Endothelial cell of umbilical vein (primary cell): ENCODE measurements at regions of chr5 and their contacts with region 1.

Region 1: DNA sequence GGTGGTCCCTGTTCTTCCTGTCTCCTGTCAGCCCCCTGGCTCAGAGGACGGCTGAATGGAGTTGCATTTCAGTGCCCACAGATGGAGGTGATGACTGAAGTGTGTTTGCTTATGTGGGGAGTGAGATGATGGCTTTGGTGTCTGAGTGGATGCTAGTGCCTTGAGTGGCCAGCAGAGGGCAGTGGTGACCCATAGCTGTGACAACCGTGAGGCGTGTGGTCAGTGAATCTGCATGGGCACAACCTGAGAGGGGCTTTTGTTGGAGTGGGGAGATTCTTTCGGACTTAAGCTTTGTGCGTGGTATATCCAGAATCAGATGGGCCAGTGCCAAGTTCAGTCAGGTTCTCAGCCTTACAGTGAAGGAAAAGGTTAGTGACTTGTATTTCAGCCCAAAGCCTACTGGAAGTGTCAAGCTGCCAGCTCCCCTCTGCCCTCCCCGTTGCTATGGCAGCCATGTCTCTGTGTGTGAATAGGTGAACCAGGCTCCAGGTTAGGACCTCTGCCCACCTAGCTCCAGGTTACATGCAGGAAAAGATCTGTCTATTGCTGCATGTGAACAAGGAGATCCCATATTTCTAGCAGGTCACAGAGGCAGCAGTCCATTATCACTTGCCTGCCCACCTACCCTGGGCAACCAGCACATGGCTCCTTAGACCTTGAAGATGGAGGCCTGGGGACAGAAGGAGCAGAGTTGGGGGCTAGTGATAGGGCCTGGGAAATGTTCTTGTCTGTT is 14.7 kb upstream of the CXXC5 start:
- DNase-seq: peak; percentile 85
- H3K4me3 ChIP-seq: no peak overlapping the region
- H3K27ac ChIP-seq: no peak overlapping the region
- H3K4me1 ChIP-seq: peaks cover 22% of the 10 kb centered on the region
- H3K27me3 ChIP-seq: no peaks in the 10 kb centered on the region
- CTCF ChIP-seq: peak; percentile 93 to 95
- POLR2A ChIP-seq: no peak

Region 2: DNA sequence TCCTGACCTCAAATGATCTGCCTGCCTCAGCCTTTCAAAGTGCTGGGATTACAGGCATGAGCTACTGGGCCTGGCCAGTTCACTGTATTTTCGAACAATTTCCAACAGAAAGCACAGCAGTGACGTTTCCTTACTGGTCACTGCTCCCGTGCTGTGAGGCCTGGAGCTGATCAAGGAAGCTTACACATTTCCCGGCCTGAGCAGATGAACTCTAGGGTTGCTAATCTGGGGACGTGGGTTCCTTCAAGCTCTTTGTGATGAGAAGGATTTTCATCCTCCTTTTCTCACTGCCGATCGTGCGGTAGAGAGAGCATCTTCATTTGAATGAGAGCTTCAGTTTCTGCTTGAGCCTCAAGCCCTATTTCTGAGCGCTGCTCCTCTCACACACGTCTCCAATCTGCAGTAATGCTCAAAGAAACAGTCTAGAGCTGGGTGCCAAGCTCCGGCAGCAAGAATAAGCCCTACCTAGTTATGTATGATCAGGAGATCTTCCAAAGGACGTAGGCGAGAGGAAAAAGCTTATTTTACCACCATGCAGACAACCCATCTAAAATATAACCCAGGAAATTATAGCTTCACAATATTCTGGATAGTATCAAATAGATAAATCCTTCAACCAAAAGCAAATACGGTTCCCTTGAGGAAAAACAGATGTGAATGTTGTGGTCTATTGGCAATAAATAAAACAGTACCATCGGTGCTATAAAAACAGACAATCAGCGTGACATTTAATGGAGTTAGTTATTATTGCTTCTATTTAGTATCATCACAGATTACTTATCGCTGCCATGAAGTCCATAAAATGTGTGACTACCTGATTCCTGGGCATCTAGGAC is 222.2 kb before region 1 on chr5:
- CTCF ChIA-PET with region 1: no interaction called
- POLR2A ChIA-PET with region 1: no interaction called
- dilution Hi-C with region 1: no loop called
- intact Hi-C with region 1: no loop called
- DNase-seq: no peak
- H3K4me3 ChIP-seq: no peak overlapping the region
- H3K27ac ChIP-seq: no peak overlapping the region
- H3K4me1 ChIP-seq: no peaks in the 10 kb centered on the region
- H3K27me3 ChIP-seq: no peaks in the 10 kb centered on the region
- CTCF ChIP-seq: no peak
- POLR2A ChIP-seq: no peak

Region 3: DNA sequence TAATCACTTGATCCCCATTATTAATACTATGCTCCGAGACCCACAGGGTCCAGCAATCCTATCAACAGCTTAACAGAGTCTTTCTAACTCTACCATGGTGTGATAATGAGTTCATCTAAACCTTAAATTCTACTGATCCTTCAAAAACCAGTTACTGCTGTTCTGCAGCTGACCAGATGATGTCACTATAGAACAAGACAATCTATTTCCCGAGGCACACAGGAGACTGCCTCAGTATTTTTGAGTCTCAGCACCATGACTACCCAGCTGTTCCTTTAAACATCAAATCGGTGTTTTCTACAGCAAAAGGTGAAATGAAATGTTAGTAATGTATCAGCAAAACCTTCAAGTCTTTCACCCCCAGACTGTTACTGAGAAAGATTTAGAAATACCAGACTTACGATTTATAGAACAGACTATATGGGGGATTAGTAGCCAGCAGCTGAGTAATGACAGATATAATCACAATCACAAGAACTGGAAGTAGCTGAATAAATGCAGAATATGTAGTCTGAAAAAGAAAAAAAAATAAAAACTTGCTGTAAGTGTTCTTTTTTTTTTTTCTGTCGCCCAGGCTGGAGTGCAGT is 211.1 kb before region 1 on chr5:
- CTCF ChIA-PET with region 1: interaction called, 19 read pairs
- POLR2A ChIA-PET with region 1: no interaction called
- dilution Hi-C with region 1: no loop called
- intact Hi-C with region 1: loop called (anchors 2 kb)
- DNase-seq: peak; percentile 79
- H3K4me3 ChIP-seq: no peak overlapping the region
- H3K27ac ChIP-seq: no peak overlapping the region
- H3K4me1 ChIP-seq: peaks cover 25% of the 10 kb centered on the region
- H3K27me3 ChIP-seq: no peaks in the 10 kb centered on the region
- CTCF ChIP-seq: peak; percentile 63 to 81
- POLR2A ChIP-seq: no peak

Region 4: DNA sequence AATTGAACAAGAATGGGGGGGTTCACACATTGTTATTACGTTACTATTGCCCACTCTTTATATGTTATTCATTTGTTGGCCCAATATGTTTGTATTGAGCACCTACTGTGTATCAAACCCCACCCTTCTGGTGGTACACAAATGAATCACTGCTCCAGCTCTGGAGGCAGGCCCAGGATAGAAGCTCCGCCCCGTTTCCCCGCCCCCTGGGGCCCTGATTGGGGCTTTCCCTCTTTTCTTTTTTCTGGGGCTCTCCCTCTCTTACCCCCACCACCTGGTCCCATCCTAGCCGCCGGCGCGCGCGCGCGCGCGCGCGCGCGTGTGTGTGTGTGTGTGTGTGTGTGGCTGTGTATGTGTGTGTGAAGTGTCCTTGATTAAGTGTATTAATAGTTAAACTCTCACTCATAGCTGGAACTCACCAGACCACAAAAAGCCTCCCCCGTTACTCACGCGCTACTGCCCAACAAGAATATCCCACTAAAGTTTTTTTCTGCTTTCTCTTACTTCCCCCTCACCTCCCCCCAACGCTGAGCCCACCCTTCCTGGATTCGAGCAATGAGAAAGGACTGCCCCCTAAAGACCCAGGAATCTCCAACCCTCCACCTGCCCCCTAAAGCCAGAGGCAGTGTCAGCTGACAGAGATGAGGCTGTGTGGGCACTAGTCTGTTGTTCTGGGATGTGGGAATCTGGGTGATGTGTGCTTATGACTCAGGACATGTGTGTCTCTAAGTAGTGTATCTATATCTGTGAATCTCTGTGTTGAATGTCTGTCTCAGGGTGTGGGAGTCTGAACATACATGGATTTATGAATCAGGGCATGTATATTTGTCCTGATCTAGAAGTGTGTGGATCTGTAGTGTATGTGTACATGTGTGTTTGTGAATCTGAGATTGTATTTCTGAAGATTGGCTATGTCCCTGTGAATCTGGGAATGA is 18.7 kb after region 1 on chr5:
- CTCF ChIA-PET with region 1: interaction called, 161 read pairs
- POLR2A ChIA-PET with region 1: interaction called, 7 read pairs
- dilution Hi-C with region 1: no loop called
- intact Hi-C with region 1: loop called (anchors 1 kb)
- DNase-seq: peak; percentile 73
- H3K4me3 ChIP-seq: no peak overlapping the region
- H3K27ac ChIP-seq: no peak overlapping the region
- H3K4me1 ChIP-seq: peaks cover 29% of the 10 kb centered on the region
- H3K27me3 ChIP-seq: peaks cover 5 to 24% of the 10 kb centered on the region in 2 experiments
- CTCF ChIP-seq: no peak
- POLR2A ChIP-seq: no peak

Region 5: DNA sequence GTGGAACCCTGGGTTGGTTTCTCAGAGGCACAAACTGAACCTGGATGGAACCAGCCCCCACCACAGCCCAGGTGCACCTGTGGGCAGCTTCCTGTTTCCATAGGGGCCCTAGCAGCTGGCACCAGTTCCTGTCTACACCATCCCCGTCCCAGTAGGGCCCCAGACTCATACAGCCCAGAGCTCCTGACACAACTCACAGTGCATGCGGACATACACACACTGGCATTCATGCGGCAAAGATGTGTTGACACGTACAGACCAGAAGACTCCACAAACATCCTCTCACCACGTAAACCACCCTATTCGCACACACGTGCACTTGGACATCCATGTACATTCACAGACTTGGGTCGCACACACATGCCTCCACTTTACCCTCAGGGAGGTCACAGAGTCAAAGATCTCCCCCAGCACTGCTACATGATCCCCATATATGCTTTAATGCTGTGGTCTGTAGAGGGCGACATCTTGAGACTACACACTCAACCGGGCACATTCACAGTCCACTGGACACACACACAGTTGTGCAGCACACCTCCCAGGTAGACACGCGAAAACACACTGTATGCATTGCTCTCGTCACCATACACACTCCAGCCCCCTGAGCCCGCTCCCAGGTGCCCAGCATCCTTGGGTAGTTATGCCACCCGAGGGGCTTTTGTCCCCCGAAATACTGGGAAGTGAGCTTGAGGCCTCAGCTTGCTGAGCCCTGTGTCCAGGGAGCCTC is 37.1 kb after region 1 on chr5:
- CTCF ChIA-PET with region 1: interaction called, 9 read pairs
- POLR2A ChIA-PET with region 1: no interaction called
- dilution Hi-C with region 1: no loop called
- intact Hi-C with region 1: loop called (anchors 2 kb)
- DNase-seq: peak; percentile 33
- H3K4me3 ChIP-seq: no peak overlapping the region
- H3K27ac ChIP-seq: no peak overlapping the region
- H3K4me1 ChIP-seq: peaks cover 32% of the 10 kb centered on the region
- H3K27me3 ChIP-seq: no peaks in the 10 kb centered on the region
- CTCF ChIP-seq: peak; percentile 27 to 43
- POLR2A ChIP-seq: no peak

Region 6: DNA sequence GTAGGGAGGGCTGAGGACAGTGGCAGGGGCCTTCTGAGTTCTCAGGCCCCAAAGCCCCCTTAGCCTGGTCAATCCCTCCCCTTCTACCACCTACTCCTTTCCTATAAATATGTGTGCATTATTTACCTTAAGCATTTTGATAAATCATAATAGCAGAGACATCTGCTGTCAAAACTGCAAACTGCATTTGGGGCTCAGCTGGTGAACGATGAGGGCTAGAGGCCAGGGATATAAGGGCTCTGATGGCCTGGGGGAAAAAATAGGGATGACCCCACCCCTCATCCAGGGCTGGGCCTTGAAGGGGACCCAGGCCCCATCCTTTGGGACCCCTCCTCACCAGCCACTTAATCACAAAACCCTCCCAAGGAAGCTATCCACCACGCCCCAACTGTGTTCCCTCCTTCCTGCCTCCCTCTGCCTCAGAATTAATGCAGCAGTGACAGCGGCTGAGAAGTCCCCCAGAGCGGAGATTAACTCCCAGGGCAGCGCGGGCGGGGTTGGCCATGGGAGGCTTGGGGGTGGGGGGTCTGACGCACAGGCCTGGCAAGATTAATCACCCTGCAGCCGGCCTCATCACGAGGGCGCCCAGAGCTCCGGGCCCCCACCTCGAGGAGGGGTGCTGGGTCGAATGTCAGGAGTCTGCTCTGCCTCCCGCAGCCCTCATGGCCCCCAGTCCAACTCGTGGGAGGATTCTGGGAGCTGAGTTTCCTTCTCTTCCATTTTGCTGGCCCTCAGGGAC is 56.8 kb after region 1 on chr5:
- CTCF ChIA-PET with region 1: interaction called, 203 read pairs
- POLR2A ChIA-PET with region 1: interaction called, 3 read pairs
- dilution Hi-C with region 1: no loop called
- intact Hi-C with region 1: loop called (anchors 1 kb)
- DNase-seq: peak; percentile 53
- H3K4me3 ChIP-seq: no peak overlapping the region
- H3K27ac ChIP-seq: no peak overlapping the region
- H3K4me1 ChIP-seq: no peaks in the 10 kb centered on the region
- H3K27me3 ChIP-seq: no peaks in the 10 kb centered on the region
- CTCF ChIP-seq: peak; percentile 42 to 46
- POLR2A ChIP-seq: no peak

Region 7: GRCh38 chr5:139765409-139766217 is 132.2 kb after region 1 on chr5:
- CTCF ChIA-PET with region 1: interaction called, 240 read pairs
- POLR2A ChIA-PET with region 1: no interaction called
- dilution Hi-C with region 1: no loop called
- intact Hi-C with region 1: loop called (anchors 1 kb)
- DNase-seq: peak; percentile 76
- H3K4me3 ChIP-seq: peak overlapping the region; percentile 37 to 49 (median 40)
- H3K27ac ChIP-seq: no peak overlapping the region
- H3K4me1 ChIP-seq: peaks cover 21% of the 10 kb centered on the region
- H3K27me3 ChIP-seq: peaks cover 12 to 14% of the 10 kb centered on the region in 2 experiments
- CTCF ChIP-seq: peak in 1 of 2 donors; percentile 83
- POLR2A ChIP-seq: no peak

Region 8: GRCh38 chr5:139787568-139788293 is 154.3 kb after region 1 on chr5:
- CTCF ChIA-PET with region 1: interaction called, 11 read pairs
- POLR2A ChIA-PET with region 1: no interaction called
- dilution Hi-C with region 1: no loop called
- intact Hi-C with region 1: no loop called
- DNase-seq: peak; percentile 82
- H3K4me3 ChIP-seq: peak overlapping the region; percentile 61 to 87 (median 83)
- H3K27ac ChIP-seq: no peak overlapping the region
- H3K4me1 ChIP-seq: peaks cover 3% of the 10 kb centered on the region
- H3K27me3 ChIP-seq: peaks cover 2% of the 10 kb centered on the region in 2 experiments
- CTCF ChIP-seq: peak; percentile 93 to 98
- POLR2A ChIP-seq: no peak

Region 9: GRCh38 chr5:140011297-140011802 is 377.9 kb after region 1 on chr5:
- CTCF ChIA-PET with region 1: no interaction called
- POLR2A ChIA-PET with region 1: no interaction called
- dilution Hi-C with region 1: no loop called
- intact Hi-C with region 1: no loop called
- DNase-seq: no peak
- H3K4me3 ChIP-seq: no peak overlapping the region
- H3K27ac ChIP-seq: no peak overlapping the region
- H3K4me1 ChIP-seq: no peaks in the 10 kb centered on the region
- H3K27me3 ChIP-seq: peaks cover 25 to 28% of the 10 kb centered on the region in 2 experiments
- CTCF ChIP-seq: no peak
- POLR2A ChIP-seq: no peak

Region 10: DNA sequence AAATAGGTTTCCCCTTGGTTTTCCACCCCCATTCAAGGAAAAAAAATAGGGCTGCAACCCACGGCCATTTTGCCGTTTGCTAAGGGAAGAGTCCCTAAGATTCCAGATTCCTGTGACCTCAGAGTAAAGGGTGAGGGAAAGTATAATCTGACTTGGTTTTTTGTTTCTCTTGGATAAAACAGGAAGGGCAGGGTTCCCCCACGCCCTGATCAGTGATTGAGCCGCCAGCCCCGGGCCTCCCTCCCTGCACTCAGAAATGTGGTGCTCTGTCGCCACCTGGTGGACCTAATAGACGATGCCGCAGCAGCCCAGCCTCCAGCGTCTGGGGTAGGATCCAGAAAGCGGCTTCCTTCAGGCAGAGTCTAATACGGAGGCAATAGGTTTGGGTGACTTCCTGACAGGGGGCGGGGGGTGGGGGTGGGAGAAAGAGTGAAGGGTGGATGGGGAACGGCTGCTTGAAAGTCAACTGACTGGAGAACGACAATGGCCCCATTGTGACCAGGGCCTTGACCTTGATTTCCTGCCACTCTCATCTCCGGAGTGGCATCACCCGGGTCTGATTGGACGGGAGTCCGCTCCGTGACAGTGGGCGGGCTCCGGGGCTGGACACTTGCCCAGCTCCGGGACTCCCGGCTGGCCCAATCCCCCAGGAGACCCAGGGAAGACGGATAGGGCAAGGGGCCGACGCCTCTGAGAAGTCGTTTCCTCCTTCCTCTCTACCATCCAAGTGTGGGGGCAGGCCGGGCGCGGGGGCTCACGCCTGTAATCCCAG is 523.8 kb after region 1 on chr5:
- CTCF ChIA-PET with region 1: no interaction called
- POLR2A ChIA-PET with region 1: no interaction called
- dilution Hi-C with region 1: no loop called
- intact Hi-C with region 1: no loop called
- DNase-seq: peak; percentile 75
- H3K4me3 ChIP-seq: peak overlapping the region in 2 of 3 experiments; percentile 19 to 24
- H3K27ac ChIP-seq: no peak overlapping the region
- H3K4me1 ChIP-seq: peaks cover 4% of the 10 kb centered on the region
- H3K27me3 ChIP-seq: no peaks in the 10 kb centered on the region
- CTCF ChIP-seq: peak; percentile 81 to 86
- POLR2A ChIP-seq: no peak